IMR-90 (cell line): ENCODE measurements at regions of chr11 and their contacts with region 1.

Region 1: DNA sequence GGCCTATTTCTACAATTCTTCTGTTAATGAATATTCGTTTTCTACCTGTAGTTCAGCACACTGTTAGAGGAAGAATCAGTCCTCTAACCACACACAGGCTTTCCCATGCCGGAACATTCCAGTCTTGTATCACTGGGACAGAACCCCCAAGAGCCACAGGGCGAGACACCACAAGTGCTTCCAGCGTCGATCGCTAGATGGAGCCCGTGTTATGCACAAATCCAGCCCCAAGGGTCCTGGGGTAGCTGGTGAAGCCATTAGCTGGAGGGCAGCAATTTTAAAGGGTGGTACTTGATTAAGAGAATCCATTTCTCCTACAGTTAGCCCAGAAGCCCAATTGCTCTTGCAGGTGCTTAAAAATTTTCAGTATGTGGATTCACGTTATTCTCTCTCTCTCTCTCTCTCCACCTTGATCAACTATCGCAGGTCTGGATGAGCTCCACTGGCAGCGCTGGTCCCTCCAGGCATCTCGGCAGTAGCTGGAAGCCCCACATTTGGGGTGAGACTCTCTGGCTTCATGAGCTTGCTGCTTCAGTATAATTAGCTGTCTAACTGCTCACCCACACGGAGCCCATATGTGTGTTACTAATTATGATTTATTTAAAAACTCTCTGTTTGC is 148.2 kb upstream of the SNX19 start:
- DNase-seq: peak; percentile 70
- ATAC-seq: peak; percentile 99
- H3K4me3 ChIP-seq: no peak overlapping the region
- H3K27ac ChIP-seq: no peak overlapping the region
- H3K4me1 ChIP-seq: no peaks in the 10 kb centered on the region
- H3K27me3 ChIP-seq: peaks cover 2% of the 10 kb centered on the region
- CTCF ChIP-seq: peak; percentile 89
- POLR2A ChIP-seq: no peak
- RAD21 ChIP-seq: peak; percentile 96

Region 2: GRCh38 chr11:131025020-131025419 is 39.5 kb before region 1 on chr11:
- CTCF ChIA-PET with region 1: interaction called, 17 read pairs
- POLR2A ChIA-PET with region 1: no interaction called
- dilution Hi-C with region 1: no loop called
- in situ Hi-C with region 1: no loop called
- intact Hi-C with region 1: no loop called
- DNase-seq: peak; percentile 72
- ATAC-seq: peak; percentile 99
- H3K4me3 ChIP-seq: no peak overlapping the region
- H3K27ac ChIP-seq: no peak overlapping the region
- H3K4me1 ChIP-seq: no peaks in the 10 kb centered on the region
- H3K27me3 ChIP-seq: no peaks in the 10 kb centered on the region
- CTCF ChIP-seq: peak; percentile 81
- POLR2A ChIP-seq: no peak
- RAD21 ChIP-seq: peak; percentile 91

Region 3: GRCh38 chr11:131217313-131218310 is 153.1 kb after region 1 on chr11:
- CTCF ChIA-PET with region 1: interaction called, 30 read pairs
- POLR2A ChIA-PET with region 1: no interaction called
- dilution Hi-C with region 1: no loop called
- in situ Hi-C with region 1: loop called (anchors 10 kb)
- intact Hi-C with region 1: loop called (anchors 1 kb)
- DNase-seq: peak; percentile 21
- ATAC-seq: peak; percentile 79
- H3K4me3 ChIP-seq: no peak overlapping the region
- H3K27ac ChIP-seq: no peak overlapping the region
- H3K4me1 ChIP-seq: no peaks in the 10 kb centered on the region
- H3K27me3 ChIP-seq: peaks cover 8% of the 10 kb centered on the region
- CTCF ChIP-seq: peak; percentile 61
- POLR2A ChIP-seq: no peak
- RAD21 ChIP-seq: peak; percentile 71

Region 4: DNA sequence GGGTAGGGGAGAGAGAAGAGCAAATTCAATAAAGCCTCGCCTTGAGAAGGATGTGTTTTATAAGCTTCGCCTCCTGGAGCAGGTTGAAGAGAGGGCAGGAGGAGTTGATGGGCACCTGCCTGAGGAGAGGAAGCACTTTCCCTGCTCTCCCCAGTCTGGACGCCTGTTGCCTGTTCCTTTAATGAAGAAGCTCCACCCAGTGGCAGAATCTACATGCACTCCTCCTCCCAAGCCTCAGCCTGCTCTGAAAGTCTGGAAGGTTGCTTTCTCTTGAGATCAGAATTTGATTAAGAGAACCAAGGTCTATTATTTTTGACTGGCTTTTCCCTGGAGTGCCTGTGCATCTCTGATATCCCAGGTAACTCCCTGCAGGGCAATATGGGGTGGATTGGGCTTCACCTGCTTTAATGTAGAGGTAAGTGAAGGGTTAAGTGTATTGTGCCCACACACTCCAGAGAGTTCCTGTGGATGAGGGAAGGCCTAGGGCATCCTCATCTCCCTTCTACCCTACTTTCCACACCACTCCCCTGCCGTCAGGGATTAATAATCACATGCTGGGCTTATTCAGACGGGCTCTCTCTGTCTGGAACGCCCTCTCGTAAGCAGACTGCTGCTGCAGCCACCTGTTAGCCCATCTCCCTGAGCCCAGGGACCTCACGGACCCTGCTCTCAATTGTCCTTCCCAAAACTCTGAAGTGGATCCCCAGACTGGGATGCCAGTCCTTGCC is 328.2 kb after region 1 on chr11:
- CTCF ChIA-PET with region 1: no interaction called
- POLR2A ChIA-PET with region 1: no interaction called
- dilution Hi-C with region 1: no loop called
- in situ Hi-C with region 1: no loop called
- intact Hi-C with region 1: loop called (anchors 10 kb)
- DNase-seq: no peak
- ATAC-seq: peak; percentile 32; the same call in 1 of the 2 replicates
- H3K4me3 ChIP-seq: no peak overlapping the region
- H3K27ac ChIP-seq: no peak overlapping the region
- H3K4me1 ChIP-seq: no peaks in the 10 kb centered on the region
- H3K27me3 ChIP-seq: no peaks in the 10 kb centered on the region
- CTCF ChIP-seq: no peak
- POLR2A ChIP-seq: no peak
- RAD21 ChIP-seq: no peak

Region 5: DNA sequence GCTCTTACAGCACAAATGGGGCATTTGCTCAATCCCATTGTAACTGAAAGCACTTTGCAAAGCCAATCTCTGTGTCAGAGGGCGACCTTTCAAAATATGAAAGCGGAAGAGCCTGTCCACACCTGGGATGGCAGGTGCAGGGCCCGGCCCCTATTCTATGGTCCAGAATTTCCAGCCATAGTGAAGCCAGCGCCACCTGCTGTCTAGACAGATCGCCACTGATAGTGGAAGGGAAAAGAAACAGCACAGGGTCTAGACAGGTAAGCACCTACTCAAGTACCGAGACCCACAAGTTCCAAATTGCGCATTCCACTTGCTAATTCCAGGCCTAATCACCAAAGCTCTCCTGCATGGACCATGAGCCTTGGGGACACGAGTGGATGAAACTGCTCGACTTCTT is 447.3 kb after region 1 on chr11:
- CTCF ChIA-PET with region 1: no interaction called
- POLR2A ChIA-PET with region 1: no interaction called
- dilution Hi-C with region 1: no loop called
- in situ Hi-C with region 1: loop called (anchors 25 kb)
- intact Hi-C with region 1: loop called (anchors 1 kb)
- DNase-seq: no peak
- ATAC-seq: no peak
- H3K4me3 ChIP-seq: no peak overlapping the region
- H3K27ac ChIP-seq: no peak overlapping the region
- H3K4me1 ChIP-seq: no peaks in the 10 kb centered on the region
- H3K27me3 ChIP-seq: no peaks in the 10 kb centered on the region
- CTCF ChIP-seq: peak; percentile 43
- POLR2A ChIP-seq: no peak
- RAD21 ChIP-seq: peak; percentile 33